BJ (cell line): ENCODE measurements at regions of chr13 and their contacts with region 1.

Region 1: DNA sequence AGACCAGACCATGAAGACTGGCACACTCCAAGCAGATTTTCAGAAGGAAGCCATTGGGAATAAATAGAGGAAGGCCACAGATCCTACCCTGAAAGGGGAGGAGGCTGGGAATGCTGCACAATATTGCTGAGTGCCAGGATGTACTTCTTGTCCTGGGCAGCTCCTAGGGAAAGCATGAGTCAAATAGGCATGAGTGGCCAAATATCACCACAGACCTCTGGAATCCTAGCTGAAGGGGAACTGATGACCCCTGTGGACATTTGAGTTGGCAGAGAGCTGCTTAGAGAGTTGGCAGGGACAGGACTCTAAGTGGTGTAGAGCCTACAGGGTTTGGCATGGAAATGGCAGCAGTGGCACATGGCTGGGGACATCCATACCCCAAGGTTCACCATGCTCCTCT is 234.3 kb upstream of the TRPC4 start:
- DNase-seq: no peak
- H3K4me3 ChIP-seq: no peak overlapping the region
- H3K27me3 ChIP-seq: no peaks in the 10 kb centered on the region
- CTCF ChIP-seq: no peak

Region 2: DNA sequence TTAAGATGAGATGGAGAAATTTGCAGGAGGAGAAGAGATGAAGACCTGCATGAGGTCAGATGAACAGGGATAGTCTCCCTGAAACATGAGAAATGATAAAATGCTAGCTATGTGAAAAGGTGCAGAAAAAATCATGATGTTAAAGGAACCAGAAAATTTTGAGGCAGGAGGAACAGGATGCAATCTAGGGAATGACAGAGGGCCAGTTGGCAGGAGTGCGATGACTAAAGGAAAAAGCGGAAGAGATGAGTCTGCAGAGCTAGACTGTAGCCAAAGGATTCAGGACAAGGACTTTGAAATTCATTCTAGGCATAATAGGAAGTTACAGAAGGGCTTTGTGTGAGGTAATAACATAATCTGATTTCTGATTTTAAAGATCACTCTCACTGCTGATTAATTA is 312.2 kb before region 1 on chr13:
- CTCF ChIA-PET with region 1: no interaction called
- POLR2A ChIA-PET with region 1: no interaction called
- DNase-seq: no peak
- H3K4me3 ChIP-seq: no peak overlapping the region
- H3K27me3 ChIP-seq: no peaks in the 10 kb centered on the region
- CTCF ChIP-seq: no peak

Region 3: DNA sequence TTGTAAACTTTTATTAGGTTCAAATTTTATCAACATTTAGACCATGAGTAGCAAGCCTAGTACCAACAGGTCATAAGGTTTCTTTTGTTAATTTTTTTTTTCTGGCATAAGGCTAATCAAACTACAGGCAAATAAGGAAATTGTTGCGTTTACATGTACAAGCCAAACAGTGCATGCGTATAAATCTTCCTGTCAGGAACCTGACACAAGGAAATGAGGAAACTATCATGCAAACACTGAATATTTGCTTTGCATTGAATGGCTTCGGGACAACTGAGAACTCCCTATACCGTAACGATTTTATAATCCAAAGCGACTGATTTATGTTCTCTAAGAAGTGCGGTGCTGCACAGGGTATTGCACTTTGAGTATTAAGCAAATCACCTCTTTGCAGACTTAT is 101.2 kb before region 1 on chr13:
- CTCF ChIA-PET with region 1: no interaction called
- POLR2A ChIA-PET with region 1: no interaction called
- DNase-seq: no peak
- H3K4me3 ChIP-seq: no peak overlapping the region
- H3K27me3 ChIP-seq: no peaks in the 10 kb centered on the region
- CTCF ChIP-seq: no peak

Region 4: GRCh38 chr13:38086000-38086399 is 17.9 kb before region 1 on chr13:
- CTCF ChIA-PET with region 1: no interaction called
- POLR2A ChIA-PET with region 1: no interaction called
- DNase-seq: no peak
- H3K4me3 ChIP-seq: no peak overlapping the region
- H3K27me3 ChIP-seq: no peaks in the 10 kb centered on the region
- CTCF ChIP-seq: no peak

Region 5: DNA sequence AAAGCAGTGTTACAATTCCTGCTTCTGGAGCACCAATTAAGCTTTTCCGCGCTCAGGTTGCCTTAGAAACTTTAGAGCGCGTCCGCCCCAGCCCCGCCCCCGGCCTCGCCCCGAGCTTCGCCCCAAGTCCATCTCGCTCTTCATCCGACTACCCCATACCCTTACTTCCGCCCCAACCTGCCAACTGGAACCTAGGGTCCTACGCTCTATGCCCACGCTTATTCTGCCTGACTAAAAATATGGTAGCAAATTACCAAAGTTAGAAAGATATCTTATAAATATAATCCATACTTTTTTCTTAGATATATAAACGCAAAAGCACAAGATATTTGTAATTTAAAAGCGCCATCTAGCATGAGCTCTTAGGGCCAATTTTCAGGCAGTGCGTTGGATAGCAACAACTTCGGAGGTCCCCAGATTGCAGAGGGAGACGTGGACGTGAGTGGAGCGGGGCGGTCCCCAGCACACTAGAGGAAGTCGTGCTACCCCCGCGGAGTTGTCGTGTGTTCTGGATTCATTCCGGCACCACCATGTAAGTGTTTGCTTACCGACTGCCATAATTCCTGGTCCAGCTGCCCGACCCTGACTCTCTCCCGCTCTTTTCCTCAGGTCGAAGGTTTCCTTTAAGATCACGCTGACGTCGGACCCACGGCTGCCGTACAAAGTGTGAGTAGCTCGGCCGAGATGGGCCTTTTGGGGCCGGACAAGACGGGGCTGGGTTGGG is 245.7 kb after region 1 on chr13 and contains the start of gene UFM1:
- CTCF ChIA-PET with region 1: no interaction called
- POLR2A ChIA-PET with region 1: interaction called, 13 read pairs
- DNase-seq: peak; percentile 66
- H3K4me3 ChIP-seq: peak within 1 kb of the TSS; percentile 93
- H3K27me3 ChIP-seq: no peaks in the 10 kb centered on the region
- CTCF ChIP-seq: no peak
- polyA plus RNA-seq, gene UFM1: 31.6 and 63.7 TPM in 2 replicates

Region 6: DNA sequence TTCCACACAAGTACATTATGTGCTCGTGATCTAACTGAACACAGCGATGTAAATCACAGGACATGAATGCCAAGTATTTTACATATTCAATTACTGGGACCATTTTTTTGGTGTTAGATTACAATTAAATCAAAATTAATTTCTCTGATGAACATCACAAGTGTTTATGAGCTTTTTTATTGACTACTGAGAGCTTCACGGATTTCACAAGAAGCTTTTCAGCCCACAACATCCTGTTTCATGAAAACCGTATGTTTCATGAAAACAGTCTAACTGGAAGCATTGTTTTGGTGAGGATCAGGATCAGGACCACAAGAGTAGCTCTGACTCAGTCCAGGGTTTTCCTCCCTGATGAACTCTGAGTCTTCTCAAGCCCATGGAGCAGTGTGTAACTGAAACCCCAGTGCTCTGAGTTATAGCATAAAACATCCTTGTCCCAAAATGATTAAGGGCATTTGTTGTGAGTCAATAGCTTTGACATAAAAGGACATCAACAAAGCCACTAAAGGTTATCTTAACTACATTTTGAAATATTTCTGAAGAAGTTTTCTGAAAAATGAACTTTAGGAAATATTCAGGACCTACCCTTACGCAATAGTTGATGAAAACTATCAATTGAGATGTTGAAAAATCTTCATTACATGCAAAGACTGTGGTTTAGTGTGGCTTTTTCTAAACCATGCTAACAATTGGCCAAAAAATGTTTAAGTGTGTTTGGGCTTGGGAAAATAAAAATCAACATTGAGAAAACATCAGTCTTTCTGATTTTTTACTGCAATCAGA is 295.1 kb after region 1 on chr13:
- CTCF ChIA-PET with region 1: no interaction called
- POLR2A ChIA-PET with region 1: no interaction called
- DNase-seq: peak; percentile 85
- H3K4me3 ChIP-seq: no peak overlapping the region
- H3K27me3 ChIP-seq: peaks cover 1% of the 10 kb centered on the region; the same call in 1 of the 2 replicates
- CTCF ChIP-seq: no peak